PC-3 (cell line): ENCODE measurements at regions of chr1 and their contacts with region 1.

Region 1: DNA sequence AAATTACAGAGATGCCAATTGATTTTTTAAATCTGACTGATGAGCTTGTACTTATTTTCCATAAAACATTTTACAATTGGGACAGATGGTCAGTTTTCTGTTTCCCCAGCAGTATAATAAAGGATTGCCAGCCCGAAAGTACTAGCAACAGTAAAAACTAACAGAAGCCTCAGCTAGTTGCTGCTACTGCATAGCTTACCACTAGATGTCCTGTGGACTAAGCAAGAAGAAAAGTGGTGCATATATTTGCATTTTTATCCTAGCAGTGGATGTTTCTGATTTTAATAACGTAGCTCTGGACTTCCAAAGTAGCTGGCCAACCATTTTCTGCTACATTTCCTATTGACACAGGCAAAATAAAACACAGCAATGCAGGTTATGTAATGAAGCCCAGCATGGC is 241.5 kb downstream of the BARHL2 start:
- DNase-seq: peak; percentile 15
- ATAC-seq: peak; percentile 38; the same call in 1 of the 2 replicates
- H3K4me3 ChIP-seq: no peak overlapping the region
- H3K27ac ChIP-seq: no peak overlapping the region
- H3K4me1 ChIP-seq: no peaks in the 10 kb centered on the region
- H3K27me3 ChIP-seq: peaks cover 52% of the 10 kb centered on the region
- CTCF ChIP-seq: peak; percentile 48; the same call in 1 of the 2 replicates

Region 2: GRCh38 chr1:91129017-91129416 is 653.4 kb after region 1 on chr1:
- CTCF ChIA-PET with region 1: no interaction called
- POLR2A ChIA-PET with region 1: interaction called, 10 read pairs
- intact Hi-C with region 1: no loop called
- DNase-seq: no peak
- ATAC-seq: no peak
- H3K4me3 ChIP-seq: no peak overlapping the region
- H3K27ac ChIP-seq: no peak overlapping the region
- H3K4me1 ChIP-seq: no peaks in the 10 kb centered on the region
- H3K27me3 ChIP-seq: peaks cover 87% of the 10 kb centered on the region
- CTCF ChIP-seq: no peak